ENCODE measurements at regions of chr12 and their contacts with region 1.

Region 1: GRCh38 chr12:68364893-68365725 is 32.9 kb upstream of the MDM1 start:
- DNase-seq: peak; percentile 52 to 85 (median 77)
- ATAC-seq: peak; percentile 86
- H3K4me3 ChIP-seq: peak overlapping the region; percentile 57
- H3K4me3 Mint-ChIP-seq: peak overlapping the region; percentile 77 to 93 (median 87)
- H3K27ac ChIP-seq: peak overlapping the region; percentile 80
- H3K27ac Mint-ChIP-seq: peak overlapping the region; percentile 86 to 97 (median 93)
- H3K4me1 ChIP-seq: peaks cover 40 to 50% of the 10 kb centered on the region in 2 donors
- H3K4me1 Mint-ChIP-seq: peaks cover 56 to 84% (median 69%) of the 10 kb centered on the region in 7 donors
- H3K27me3 ChIP-seq: no peaks in the 10 kb centered on the region
- H3K27me3 Mint-ChIP-seq: no peaks in the 10 kb centered on the region

Region 2: GRCh38 chr12:68331869-68332727 is 33.0 kb before region 1 on chr12 and contains the start of gene MDM1:
- CTCF ChIA-PET with region 1: interaction called, 4 read pairs
- POLR2A ChIA-PET with region 1: no interaction called
- intact Hi-C with region 1: loop called (anchors 1 to 2 kb)
- DNase-seq: peak; percentile 85 to 96 (median 95)
- ATAC-seq: peak; percentile 98
- H3K4me3 ChIP-seq: peak within 1 kb of the TSS; percentile 68
- H3K4me3 Mint-ChIP-seq: peak within 1 kb of the TSS; percentile 85 to 93 (median 91)
- H3K27ac ChIP-seq: peak within 1 kb of the TSS; percentile 73
- H3K27ac Mint-ChIP-seq: peak within 1 kb of the TSS; percentile 78 to 93 (median 90)
- H3K4me1 ChIP-seq: peaks cover 9 to 26% of the 10 kb centered on the region in 2 donors
- H3K4me1 Mint-ChIP-seq: peaks cover 33 to 61% (median 52%) of the 10 kb centered on the region in 7 donors
- H3K27me3 ChIP-seq: no peaks in the 10 kb centered on the region
- H3K27me3 Mint-ChIP-seq: peaks cover 0 to 15% (median 0%) of the 10 kb centered on the region in 5 donors
- total RNA-seq, gene MDM1: 16.2 to 38.4 (median 23.4) TPM

Region 3: DNA sequence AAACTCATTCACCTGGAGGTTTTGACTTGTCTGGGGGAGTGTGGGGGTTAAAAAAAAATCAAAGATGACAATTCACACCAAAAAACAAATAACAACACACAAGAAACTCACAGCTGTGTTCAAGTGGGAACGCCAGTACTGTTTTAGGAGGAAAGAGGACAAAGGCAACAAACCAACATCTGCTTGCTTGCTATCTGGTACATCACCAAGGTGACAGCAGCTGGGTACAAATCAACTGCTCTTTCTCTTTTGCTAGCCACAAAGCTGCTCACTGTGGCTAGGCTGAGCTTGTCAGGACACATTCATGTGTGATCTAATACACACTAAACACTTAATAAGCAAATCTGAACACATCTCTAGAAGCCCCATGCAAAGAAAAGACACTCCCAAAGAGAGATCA is 117.6 kb after region 1 on chr12:
- CTCF ChIA-PET with region 1: no interaction called
- POLR2A ChIA-PET with region 1: interaction called, 4 read pairs
- intact Hi-C with region 1: loop called in 1 of 2 experiments (anchors 2 kb)
- DNase-seq: no peak
- ATAC-seq: peak; percentile 67
- H3K4me3 ChIP-seq: no peak overlapping the region
- H3K4me3 Mint-ChIP-seq: peak overlapping the region in 1 of 10 donors; percentile 74
- H3K27ac ChIP-seq: no peak overlapping the region
- H3K27ac Mint-ChIP-seq: peak overlapping the region in 5 of 9 donors; percentile 8 to 86 (median 65)
- H3K4me1 ChIP-seq: peaks cover 0 to 27% of the 10 kb centered on the region in 2 donors
- H3K4me1 Mint-ChIP-seq: peaks cover 10 to 46% (median 27%) of the 10 kb centered on the region in 7 donors
- H3K27me3 ChIP-seq: no peaks in the 10 kb centered on the region
- H3K27me3 Mint-ChIP-seq: no peaks in the 10 kb centered on the region

Region 4: DNA sequence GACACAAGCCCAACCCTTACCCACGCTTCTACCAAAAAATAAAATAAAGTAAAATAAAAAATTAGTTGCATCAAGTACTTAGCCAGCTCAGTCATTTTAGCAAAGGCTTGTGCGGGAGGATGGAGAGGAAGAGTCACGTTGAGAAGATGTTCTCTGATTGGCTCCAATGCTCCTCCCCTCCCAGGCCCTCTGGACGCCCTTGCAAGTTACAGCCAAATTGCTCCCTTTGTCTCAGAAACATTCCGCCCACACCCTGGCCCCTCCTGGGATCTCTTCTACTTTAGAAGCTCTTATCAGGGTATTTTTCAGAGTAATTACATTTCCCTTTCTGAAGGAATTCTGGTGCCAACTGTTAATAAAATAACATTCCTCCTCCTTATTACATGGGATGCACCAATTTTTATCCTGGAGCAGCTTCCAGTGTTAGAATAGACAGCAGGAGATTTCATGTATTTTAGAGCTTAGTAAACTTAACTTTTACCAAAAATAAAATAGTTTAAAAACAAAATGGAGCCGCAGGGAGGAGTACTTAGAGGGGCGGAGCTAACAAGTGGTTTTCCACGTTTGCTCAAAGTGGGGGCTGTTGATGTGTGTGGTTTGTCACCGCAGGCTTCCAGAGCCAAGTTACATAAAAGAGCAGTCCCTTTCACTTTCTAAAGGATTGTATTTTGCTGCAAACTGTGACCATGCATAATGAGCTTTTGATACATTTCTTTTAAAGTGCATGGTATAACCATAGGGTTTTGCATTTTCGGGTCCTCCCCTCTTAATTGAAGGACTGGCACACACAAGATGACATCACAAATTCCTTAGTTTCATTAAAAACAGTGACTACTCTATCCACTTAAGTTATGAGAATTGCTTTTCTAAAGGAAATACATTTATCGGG is 173.9 kb after region 1 on chr12:
- CTCF ChIA-PET with region 1: no interaction called
- POLR2A ChIA-PET with region 1: interaction called, 6 read pairs
- intact Hi-C with region 1: loop called (anchors 1 to 2 kb)
- DNase-seq: peak in 8 of 9 donors; percentile 47 to 84 (median 76)
- ATAC-seq: peak; percentile 96
- H3K4me3 ChIP-seq: peak overlapping the region; percentile 23
- H3K4me3 Mint-ChIP-seq: peak overlapping the region; percentile 69 to 84 (median 74)
- H3K27ac ChIP-seq: peak overlapping the region; percentile 57
- H3K27ac Mint-ChIP-seq: peak overlapping the region; percentile 83 to 96 (median 88)
- H3K4me1 ChIP-seq: peaks cover 35 to 40% of the 10 kb centered on the region in 2 donors
- H3K4me1 Mint-ChIP-seq: peaks cover 26 to 64% (median 61%) of the 10 kb centered on the region in 7 donors
- H3K27me3 ChIP-seq: no peaks in the 10 kb centered on the region
- H3K27me3 Mint-ChIP-seq: no peaks in the 10 kb centered on the region

Region 5: GRCh38 chr12:68675101-68675842 is 310.2 kb after region 1 on chr12:
- CTCF ChIA-PET with region 1: no interaction called
- POLR2A ChIA-PET with region 1: no interaction called
- intact Hi-C with region 1: loop called in 1 of 2 experiments (anchors 1 kb)
- DNase-seq: peak; percentile 30 to 87 (median 78)
- ATAC-seq: peak; percentile 98
- H3K4me3 ChIP-seq: peak overlapping the region; percentile 17
- H3K4me3 Mint-ChIP-seq: peak overlapping the region; percentile 55 to 90 (median 80)
- H3K27ac ChIP-seq: peak overlapping the region; percentile 46
- H3K27ac Mint-ChIP-seq: peak overlapping the region; percentile 83 to 95 (median 89)
- H3K4me1 ChIP-seq: peaks cover 30 to 32% of the 10 kb centered on the region in 2 donors
- H3K4me1 Mint-ChIP-seq: peaks cover 27 to 73% (median 63%) of the 10 kb centered on the region in 7 donors
- H3K27me3 ChIP-seq: no peaks in the 10 kb centered on the region
- H3K27me3 Mint-ChIP-seq: no peaks in the 10 kb centered on the region

Region 6: DNA sequence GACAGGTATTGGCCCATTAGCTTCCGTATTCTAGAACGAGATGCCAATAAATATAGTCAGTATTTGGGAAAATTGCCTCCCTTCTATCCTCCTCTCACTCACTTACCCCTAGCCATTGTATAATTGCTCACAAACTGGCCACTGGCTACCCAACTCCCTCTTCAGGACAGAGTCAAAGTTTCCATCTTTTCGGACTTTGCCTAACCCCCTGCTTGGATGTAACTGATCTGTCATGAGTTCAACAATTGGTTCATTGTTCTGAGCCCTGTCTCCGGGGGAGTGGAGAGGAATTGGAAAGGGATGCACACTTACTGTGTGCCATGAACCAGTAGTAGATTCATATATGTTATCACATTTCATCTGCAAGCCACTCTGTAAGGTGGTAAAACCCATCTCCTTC is 1472.1 kb after region 1 on chr12:
- CTCF ChIA-PET with region 1: no interaction called
- POLR2A ChIA-PET with region 1: no interaction called
- intact Hi-C with region 1: no loop called
- DNase-seq: no peak
- ATAC-seq: no peak
- H3K4me3 ChIP-seq: no peak overlapping the region
- H3K4me3 Mint-ChIP-seq: no peak overlapping the region
- H3K27ac ChIP-seq: no peak overlapping the region
- H3K27ac Mint-ChIP-seq: no peak overlapping the region
- H3K4me1 ChIP-seq: no peaks in the 10 kb centered on the region
- H3K4me1 Mint-ChIP-seq: no peaks in the 10 kb centered on the region
- H3K27me3 ChIP-seq: no peaks in the 10 kb centered on the region
- H3K27me3 Mint-ChIP-seq: peaks cover 2 to 23% (median 14%) of the 10 kb centered on the region in 5 donors